Ovary (tissue), 10 donors: ENCODE measurements at regions of chr10 and their contacts with region 1.

Region 1: DNA sequence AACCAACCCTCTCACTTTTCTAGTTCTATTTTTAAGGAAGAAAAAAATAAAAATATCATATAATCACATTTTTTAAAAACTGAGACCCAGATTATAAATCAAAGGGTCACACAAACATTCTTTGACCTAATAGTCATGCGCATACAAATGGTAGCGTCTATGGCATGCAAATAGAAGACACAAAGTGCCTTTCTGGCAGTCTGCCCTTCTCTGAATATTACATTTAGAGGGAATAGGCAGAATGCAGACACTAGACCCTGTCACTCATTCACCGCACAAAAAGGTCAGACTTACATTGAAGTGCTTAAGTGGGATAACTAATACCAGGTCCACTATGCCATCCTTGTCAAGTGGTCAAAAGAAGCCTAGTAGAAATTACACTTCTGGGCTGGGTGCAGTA is 26.5 kb upstream of the FHIP2A start:
- DNase-seq: no peak
- H3K4me3 ChIP-seq: no peak overlapping the region
- H3K27ac ChIP-seq: no peak overlapping the region
- H3K4me1 ChIP-seq: no peaks in the 10 kb centered on the region
- H3K27me3 ChIP-seq: no peaks in the 10 kb centered on the region
- CTCF ChIP-seq: no peak
- EP300 ChIP-seq: no peak
- POLR2A ChIP-seq: no peak

Region 2: DNA sequence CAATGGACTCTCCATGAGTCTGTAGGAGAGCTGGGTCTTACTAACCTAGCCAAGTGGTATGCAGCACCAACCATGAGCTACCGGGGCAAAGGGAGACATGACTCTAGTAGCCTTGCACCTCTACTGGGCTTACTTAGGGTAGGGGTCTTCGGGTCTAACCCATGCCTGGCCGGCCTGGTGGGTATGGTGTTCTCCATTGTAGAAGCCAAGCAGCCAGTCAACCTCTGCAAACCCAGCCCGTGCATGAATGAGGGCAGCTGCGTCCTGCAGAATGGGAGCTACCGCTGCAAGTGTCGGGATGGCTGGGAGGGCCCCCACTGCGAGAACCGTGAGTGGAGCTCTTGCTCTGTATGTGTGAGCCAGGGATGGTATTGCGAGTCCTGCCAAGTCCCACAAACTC is 505.0 kb before region 1 on chr10:
- intact Hi-C with region 1: loop called in 1 of 4 experiments (anchors 10 kb)
- DNase-seq: peak in 1 of 5 donors; percentile 15
- H3K4me3 ChIP-seq: no peak overlapping the region
- H3K27ac ChIP-seq: no peak overlapping the region
- H3K4me1 ChIP-seq: no peaks in the 10 kb centered on the region
- H3K27me3 ChIP-seq: no peaks in the 10 kb centered on the region
- CTCF ChIP-seq: no peak
- EP300 ChIP-seq: no peak
- POLR2A ChIP-seq: no peak

Region 3: GRCh38 chr10:115335366-115335765 is 540.3 kb after region 1 on chr10:
- intact Hi-C with region 1: no loop called
- DNase-seq: no peak
- H3K4me3 ChIP-seq: no peak overlapping the region
- H3K27ac ChIP-seq: no peak overlapping the region
- H3K4me1 ChIP-seq: no peaks in the 10 kb centered on the region
- H3K27me3 ChIP-seq: no peaks in the 10 kb centered on the region
- CTCF ChIP-seq: no peak
- EP300 ChIP-seq: no peak
- POLR2A ChIP-seq: no peak

Region 4: DNA sequence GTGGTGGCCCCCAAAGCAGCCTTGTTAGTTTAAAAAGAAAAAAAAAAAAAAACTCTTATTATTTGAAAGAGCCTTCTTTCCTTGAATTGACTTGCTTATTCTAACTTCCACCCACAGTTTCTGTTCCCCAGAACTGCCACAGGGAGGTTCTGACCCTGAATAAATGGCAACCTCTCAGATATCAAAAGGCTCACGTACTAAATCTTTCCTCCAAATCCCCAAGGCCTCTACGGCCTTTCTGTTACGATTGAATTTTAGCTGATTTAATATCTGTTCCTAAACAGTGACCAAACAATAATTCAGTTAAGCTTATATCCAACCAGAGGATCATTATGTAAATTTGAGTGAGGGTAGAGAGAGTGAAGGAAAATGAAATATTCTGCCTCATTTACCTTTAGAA is 995.2 kb after region 1 on chr10:
- intact Hi-C with region 1: no loop called
- DNase-seq: no peak
- H3K4me3 ChIP-seq: no peak overlapping the region
- H3K27ac ChIP-seq: no peak overlapping the region
- H3K4me1 ChIP-seq: no peaks in the 10 kb centered on the region
- H3K27me3 ChIP-seq: no peaks in the 10 kb centered on the region
- CTCF ChIP-seq: no peak
- EP300 ChIP-seq: no peak
- POLR2A ChIP-seq: no peak